Heart right ventricle (tissue), 16 donors: ENCODE measurements at regions of chr6 and their contacts with region 1.

Region 1: DNA sequence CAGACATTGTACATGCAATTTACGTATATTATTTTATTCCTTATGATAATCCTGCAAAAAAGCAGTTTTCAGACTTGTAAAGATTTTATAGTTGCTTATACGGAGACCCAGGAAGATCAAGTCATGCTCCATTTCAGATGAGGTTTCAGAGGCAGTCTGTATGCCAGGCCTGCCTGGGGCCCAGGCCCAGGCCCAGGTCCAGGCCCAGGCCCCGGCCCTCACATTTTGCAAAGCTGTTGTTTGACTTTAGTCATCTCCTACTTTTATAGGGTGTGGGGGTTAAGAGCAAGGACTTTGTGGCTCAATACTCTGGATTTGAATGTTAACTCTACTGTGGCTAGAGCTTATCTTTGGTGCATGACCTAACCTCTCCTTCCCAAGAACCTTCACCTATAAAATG is 217.9 kb downstream of the SAMD5 start:
- DNase-seq: no peak
- ATAC-seq: no peak
- H3K4me3 ChIP-seq: no peak overlapping the region
- H3K27ac ChIP-seq: no peak overlapping the region
- H3K4me1 ChIP-seq: no peaks in the 10 kb centered on the region
- H3K27me3 ChIP-seq: no peaks in the 10 kb centered on the region
- CTCF ChIP-seq: no peak

Region 2: GRCh38 chr6:147651249-147652063 is 74.9 kb before region 1 on chr6:
- intact Hi-C with region 1: no loop called
- DNase-seq: peak; percentile 19 to 28
- ATAC-seq: peak; percentile 71 to 96 (median 85)
- H3K4me3 ChIP-seq: no peak overlapping the region
- H3K27ac ChIP-seq: peak overlapping the region in 1 of 10 donors; percentile 28
- H3K4me1 ChIP-seq: peaks cover 0 to 16% (median 12%) of the 10 kb centered on the region in 9 donors
- H3K27me3 ChIP-seq: no peaks in the 10 kb centered on the region
- CTCF ChIP-seq: peak in 7 of 9 donors; percentile 33 to 59 (median 44)

Region 3: GRCh38 chr6:147695819-147696218 is 30.5 kb before region 1 on chr6:
- intact Hi-C with region 1: loop called in 1 of 10 experiments (anchors 1 kb)
- DNase-seq: no peak
- ATAC-seq: no peak
- H3K4me3 ChIP-seq: no peak overlapping the region
- H3K27ac ChIP-seq: no peak overlapping the region
- H3K4me1 ChIP-seq: peaks cover 0 to 10% (median 0%) of the 10 kb centered on the region in 9 donors
- H3K27me3 ChIP-seq: no peaks in the 10 kb centered on the region
- CTCF ChIP-seq: no peak

Region 4: DNA sequence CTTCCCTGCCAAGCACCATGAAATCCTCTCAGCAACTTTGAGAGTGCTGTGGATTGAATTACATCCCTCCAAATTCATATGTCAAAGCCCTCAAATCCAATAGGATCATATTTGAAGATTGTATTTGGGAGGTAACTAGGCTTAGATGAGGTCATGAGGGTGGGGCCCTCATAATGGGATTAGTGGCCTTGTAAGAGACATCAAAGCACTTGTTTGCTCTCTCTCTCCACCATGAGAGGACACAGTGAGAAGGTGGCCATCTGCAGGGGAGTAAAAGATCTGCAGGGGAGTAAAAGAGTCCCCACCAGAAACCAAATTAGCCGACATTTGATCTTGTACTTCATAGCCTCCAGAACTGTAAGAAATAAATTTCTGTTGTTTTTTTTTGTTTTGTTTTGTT is 80.4 kb after region 1 on chr6:
- intact Hi-C with region 1: no loop called
- DNase-seq: no peak
- ATAC-seq: no peak
- H3K4me3 ChIP-seq: no peak overlapping the region
- H3K27ac ChIP-seq: no peak overlapping the region
- H3K4me1 ChIP-seq: no peaks in the 10 kb centered on the region
- H3K27me3 ChIP-seq: peaks cover 0 to 4% (median 0%) of the 10 kb centered on the region in 7 donors
- CTCF ChIP-seq: no peak